ENCODE measurements at regions of chr10 and their contacts with region 1.

Region 1: GRCh38 chr10:112140110-112140970 is 43.2 kb downstream of the GPAM start:
- DNase-seq: peak; percentile 89
- ATAC-seq: peak; percentile 100
- H3K4me3 Mint-ChIP-seq: no peak overlapping the region
- H3K27ac Mint-ChIP-seq: no peak overlapping the region
- H3K4me1 Mint-ChIP-seq: no peaks in the 10 kb centered on the region
- H3K27me3 Mint-ChIP-seq: peaks cover 3% of the 10 kb centered on the region
- CTCF ChIP-seq: peak; percentile 86

Region 2: GRCh38 chr10:112115799-112116385 is 24.4 kb before region 1 on chr10:
- CTCF ChIA-PET with region 1: interaction called, 86 read pairs
- POLR2A ChIA-PET with region 1: no interaction called
- intact Hi-C with region 1: no loop called
- DNase-seq: peak; percentile 59
- ATAC-seq: peak; percentile 66
- H3K4me3 Mint-ChIP-seq: no peak overlapping the region
- H3K27ac Mint-ChIP-seq: no peak overlapping the region
- H3K4me1 Mint-ChIP-seq: no peaks in the 10 kb centered on the region
- H3K27me3 Mint-ChIP-seq: peaks cover 3% of the 10 kb centered on the region
- CTCF ChIP-seq: peak; percentile 58

Region 3: GRCh38 chr10:112151524-112152039 is 11.2 kb after region 1 on chr10:
- CTCF ChIA-PET with region 1: interaction called, 26 read pairs
- POLR2A ChIA-PET with region 1: no interaction called
- intact Hi-C with region 1: no loop called
- DNase-seq: no peak
- ATAC-seq: no peak
- H3K4me3 Mint-ChIP-seq: no peak overlapping the region
- H3K27ac Mint-ChIP-seq: no peak overlapping the region
- H3K4me1 Mint-ChIP-seq: no peaks in the 10 kb centered on the region
- H3K27me3 Mint-ChIP-seq: no peaks in the 10 kb centered on the region
- CTCF ChIP-seq: no peak

Region 4: DNA sequence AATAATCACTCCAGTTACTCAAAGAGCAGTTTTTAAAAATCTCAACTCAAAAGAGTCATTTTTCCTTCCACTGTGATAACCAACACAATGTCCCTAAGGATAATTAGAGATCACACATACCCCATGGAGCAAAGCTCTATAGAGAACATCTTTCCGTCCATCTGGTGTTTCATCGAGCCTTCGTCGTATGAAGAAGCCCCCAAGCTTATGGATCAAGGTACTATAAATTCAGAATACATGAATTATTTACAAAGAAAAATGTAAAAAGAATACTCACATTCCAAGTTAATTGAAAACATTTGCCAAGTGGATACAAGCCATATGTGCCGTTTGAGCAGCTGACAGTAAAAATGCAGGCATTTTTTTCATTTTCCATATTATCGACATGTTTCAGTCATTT is 28.4 kb after region 1 on chr10:
- CTCF ChIA-PET with region 1: interaction called, 11 read pairs
- POLR2A ChIA-PET with region 1: no interaction called
- intact Hi-C with region 1: no loop called
- DNase-seq: no peak
- ATAC-seq: no peak
- H3K4me3 Mint-ChIP-seq: no peak overlapping the region
- H3K27ac Mint-ChIP-seq: no peak overlapping the region
- H3K4me1 Mint-ChIP-seq: no peaks in the 10 kb centered on the region
- H3K27me3 Mint-ChIP-seq: no peaks in the 10 kb centered on the region
- CTCF ChIP-seq: no peak

Region 5: DNA sequence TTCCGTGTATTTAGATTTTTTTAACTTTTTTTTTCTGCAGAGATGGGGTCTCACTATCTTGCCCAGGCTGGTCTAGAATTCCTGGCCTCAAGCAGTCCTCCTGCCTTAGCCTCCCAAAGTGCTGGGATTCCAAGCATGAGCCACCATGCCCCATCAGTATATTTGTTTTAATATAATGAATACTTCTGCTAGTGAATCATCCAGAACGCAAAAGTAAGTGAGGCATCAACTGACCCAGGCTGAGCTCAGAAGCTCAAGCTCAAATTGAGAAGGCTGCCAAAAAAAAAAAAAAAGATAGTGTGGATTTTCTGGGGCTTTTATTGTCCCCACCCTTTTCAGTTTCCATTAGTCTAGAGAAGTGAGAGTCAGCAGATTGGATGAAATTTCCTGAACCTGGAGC is 103.9 kb after region 1 on chr10:
- CTCF ChIA-PET with region 1: no interaction called
- POLR2A ChIA-PET with region 1: no interaction called
- intact Hi-C with region 1: no loop called
- DNase-seq: no peak
- ATAC-seq: no peak
- H3K4me3 Mint-ChIP-seq: no peak overlapping the region
- H3K27ac Mint-ChIP-seq: no peak overlapping the region
- H3K4me1 Mint-ChIP-seq: no peaks in the 10 kb centered on the region
- H3K27me3 Mint-ChIP-seq: peaks cover 6% of the 10 kb centered on the region
- CTCF ChIP-seq: no peak

Region 6: GRCh38 chr10:112290054-112290373 is 149.7 kb after region 1 on chr10:
- CTCF ChIA-PET with region 1: no interaction called
- POLR2A ChIA-PET with region 1: no interaction called
- intact Hi-C with region 1: no loop called
- DNase-seq: no peak
- ATAC-seq: no peak
- H3K4me3 Mint-ChIP-seq: no peak overlapping the region
- H3K27ac Mint-ChIP-seq: no peak overlapping the region
- H3K4me1 Mint-ChIP-seq: no peaks in the 10 kb centered on the region
- H3K27me3 Mint-ChIP-seq: peaks cover 8% of the 10 kb centered on the region
- CTCF ChIP-seq: no peak

Region 7: GRCh38 chr10:112307358-112308124 is 167.2 kb after region 1 on chr10:
- CTCF ChIA-PET with region 1: interaction called, 29 read pairs
- POLR2A ChIA-PET with region 1: no interaction called
- intact Hi-C with region 1: loop called (anchors 10 kb)
- DNase-seq: peak; percentile 52
- ATAC-seq: peak; percentile 77
- H3K4me3 Mint-ChIP-seq: no peak overlapping the region
- H3K27ac Mint-ChIP-seq: no peak overlapping the region
- H3K4me1 Mint-ChIP-seq: no peaks in the 10 kb centered on the region
- H3K27me3 Mint-ChIP-seq: peaks cover 11% of the 10 kb centered on the region
- CTCF ChIP-seq: peak; percentile 82

Measured in activated CD8-positive, alpha-beta T cell treated with anti-CD3 and anti-CD28 coated beads for 36 hours (primary cell).